Activated CD4-positive, alpha-beta T cell treated with anti-CD3 and anti-CD28 coated beads, Interleukin-2, amount 10 ng/mL, durations not matched to agents 7 days and 5 days (primary cell): ENCODE measurements at regions of chr4 and their contacts with region 1.

Region 1: GRCh38 chr4:122577808-122578781 is 42.8 kb downstream of the IL21 start:
- DNase-seq: peak; percentile 84
- H3K4me3 Mint-ChIP-seq: peak overlapping the region; percentile 41
- H3K27ac Mint-ChIP-seq: peak overlapping the region; percentile 84
- H3K4me1 Mint-ChIP-seq: peaks cover 48% of the 10 kb centered on the region
- H3K27me3 Mint-ChIP-seq: no peaks in the 10 kb centered on the region

Region 2: DNA sequence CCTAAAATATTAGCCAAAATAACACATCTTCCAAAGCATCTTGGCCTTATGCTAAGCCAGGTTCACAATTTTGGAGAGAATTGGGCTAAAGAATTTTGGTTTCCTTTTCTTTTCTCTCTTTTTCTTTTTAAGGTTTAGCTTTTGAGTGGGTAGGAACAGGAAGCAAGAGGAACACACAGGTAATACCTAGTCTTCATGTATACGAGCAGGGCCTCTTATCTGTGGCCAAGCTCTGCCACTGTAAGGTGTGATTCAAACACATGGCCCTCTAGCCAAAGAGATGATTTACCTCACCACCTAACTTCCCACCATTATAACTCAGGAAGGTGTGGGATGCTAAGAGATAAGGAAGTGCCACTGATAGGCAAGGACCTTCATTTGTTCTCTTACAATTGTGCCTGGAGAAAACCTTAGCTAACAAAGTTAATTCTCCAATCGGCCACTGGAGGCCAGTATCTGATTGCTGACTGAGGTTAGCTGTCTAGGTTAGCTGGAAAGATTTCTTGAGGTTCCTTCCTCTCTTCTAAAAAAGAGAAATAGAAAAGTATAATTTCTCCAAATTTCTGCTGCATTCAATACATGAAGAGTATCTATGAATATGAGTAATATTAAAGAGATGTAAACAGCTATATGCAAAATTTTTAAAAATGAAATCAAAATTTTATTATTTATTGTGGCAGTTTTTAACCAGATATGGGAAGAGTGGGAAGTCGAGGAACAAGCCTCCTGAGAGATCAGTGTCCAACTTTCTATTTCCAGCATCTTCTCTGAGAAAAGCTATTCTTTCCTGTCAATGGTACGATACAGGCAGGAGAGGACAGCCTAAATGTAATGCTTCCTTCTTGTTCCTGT is 677.7 kb before region 1 on chr4:
- CTCF ChIA-PET with region 1: interaction called, 14 read pairs
- POLR2A ChIA-PET with region 1: no interaction called
- DNase-seq: peak; percentile 62
- H3K4me3 Mint-ChIP-seq: no peak overlapping the region
- H3K27ac Mint-ChIP-seq: no peak overlapping the region
- H3K4me1 Mint-ChIP-seq: peaks cover 8% of the 10 kb centered on the region
- H3K27me3 Mint-ChIP-seq: peaks cover 7% of the 10 kb centered on the region

Region 3: GRCh38 chr4:122259849-122260248 is 318.2 kb before region 1 on chr4:
- CTCF ChIA-PET with region 1: no interaction called
- POLR2A ChIA-PET with region 1: no interaction called
- DNase-seq: no peak
- H3K4me3 Mint-ChIP-seq: no peak overlapping the region
- H3K27ac Mint-ChIP-seq: no peak overlapping the region
- H3K4me1 Mint-ChIP-seq: no peaks in the 10 kb centered on the region
- H3K27me3 Mint-ChIP-seq: no peaks in the 10 kb centered on the region

Region 4: GRCh38 chr4:122562449-122562848 is 15.6 kb before region 1 on chr4:
- CTCF ChIA-PET with region 1: no interaction called
- POLR2A ChIA-PET with region 1: no interaction called
- DNase-seq: no peak
- H3K4me3 Mint-ChIP-seq: no peak overlapping the region
- H3K27ac Mint-ChIP-seq: no peak overlapping the region
- H3K4me1 Mint-ChIP-seq: peaks cover 7% of the 10 kb centered on the region
- H3K27me3 Mint-ChIP-seq: no peaks in the 10 kb centered on the region

Region 5: DNA sequence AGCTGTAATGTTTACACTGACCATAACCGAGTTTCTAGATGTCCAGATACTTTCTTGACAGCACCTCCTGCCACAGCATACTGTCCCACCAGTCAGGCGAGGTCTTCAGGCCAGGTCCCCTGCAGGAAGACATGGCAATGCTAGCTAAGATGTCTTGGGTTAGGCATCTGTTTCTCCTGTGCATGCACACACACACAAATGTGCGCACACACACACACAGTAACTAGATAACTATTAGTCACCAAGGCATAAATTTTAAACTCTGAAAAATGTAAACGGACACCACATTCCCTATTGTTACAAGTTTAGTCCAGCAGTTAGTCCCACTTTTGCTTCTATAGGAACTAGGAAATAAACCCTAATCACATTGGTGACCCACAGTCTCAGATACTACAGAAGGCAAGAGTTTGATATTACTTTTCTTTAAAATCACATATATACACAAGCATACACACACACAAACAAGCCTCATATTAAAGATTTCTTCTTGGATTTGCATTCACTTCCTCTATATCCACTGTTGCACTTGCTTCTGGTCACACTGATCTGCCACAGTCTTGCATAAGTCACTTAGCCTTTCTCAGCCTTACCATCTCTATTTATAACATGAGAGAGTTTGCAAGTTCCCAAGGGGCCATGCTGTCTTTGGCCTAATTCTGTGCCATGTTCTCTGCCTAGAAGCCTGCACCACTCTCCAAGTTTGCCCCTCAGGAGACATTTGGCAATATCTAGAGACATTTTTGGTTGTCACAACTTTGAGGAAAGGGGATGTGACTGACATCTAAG is 10.6 kb after region 1 on chr4:
- CTCF ChIA-PET with region 1: interaction called, 12 read pairs
- POLR2A ChIA-PET with region 1: no interaction called
- DNase-seq: no peak
- H3K4me3 Mint-ChIP-seq: no peak overlapping the region
- H3K27ac Mint-ChIP-seq: no peak overlapping the region
- H3K4me1 Mint-ChIP-seq: peaks cover 25% of the 10 kb centered on the region
- H3K27me3 Mint-ChIP-seq: no peaks in the 10 kb centered on the region